Mammary epithelial cell (primary cell): ENCODE measurements at regions of chr2 and their contacts with region 1.

Region 1: GRCh38 chr2:205605628-205606304 is 76.5 kb upstream of the NRP2 start:
- DNase-seq: no peak
- H3K4me3 ChIP-seq: no peak overlapping the region
- H3K27ac ChIP-seq: no peak overlapping the region
- H3K4me1 ChIP-seq: no peaks in the 10 kb centered on the region
- H3K27me3 ChIP-seq: peaks cover 2% of the 10 kb centered on the region
- CTCF ChIP-seq: no peak

Region 2: DNA sequence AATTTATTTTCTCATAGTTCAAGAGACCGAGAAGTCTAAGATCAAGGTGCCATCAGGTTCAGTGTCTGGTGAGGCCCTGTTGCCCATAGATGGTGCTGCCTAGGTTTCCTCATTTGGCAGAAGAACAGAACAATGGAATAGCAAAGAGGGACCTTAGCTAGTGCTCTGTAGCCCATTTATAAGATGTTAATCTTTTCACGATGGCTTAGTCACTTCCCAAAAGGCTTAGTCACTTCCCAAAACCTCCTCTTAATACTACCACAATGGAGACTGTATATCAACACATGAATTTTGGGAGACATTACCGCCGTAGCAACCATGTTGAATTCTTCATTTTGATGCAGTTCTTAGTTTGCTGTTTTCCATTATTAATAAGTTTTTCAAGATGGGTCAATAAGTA is 169.8 kb before region 1 on chr2:
- CTCF ChIA-PET with region 1: no interaction called
- dilution Hi-C with region 1: no loop called
- in situ Hi-C with region 1: no loop called
- intact Hi-C with region 1: no loop called
- DNase-seq: peak; percentile 19
- H3K4me3 ChIP-seq: no peak overlapping the region
- H3K27ac ChIP-seq: no peak overlapping the region
- H3K4me1 ChIP-seq: peaks cover 4% of the 10 kb centered on the region
- H3K27me3 ChIP-seq: no peaks in the 10 kb centered on the region
- CTCF ChIP-seq: no peak

Region 3: GRCh38 chr2:205543937-205544702 is 61.6 kb before region 1 on chr2:
- CTCF ChIA-PET with region 1: no interaction called
- dilution Hi-C with region 1: no loop called
- in situ Hi-C with region 1: no loop called
- intact Hi-C with region 1: no loop called
- DNase-seq: no peak
- H3K4me3 ChIP-seq: no peak overlapping the region
- H3K27ac ChIP-seq: no peak overlapping the region
- H3K4me1 ChIP-seq: no peaks in the 10 kb centered on the region
- H3K27me3 ChIP-seq: no peaks in the 10 kb centered on the region
- CTCF ChIP-seq: no peak

Region 4: GRCh38 chr2:205593891-205594290 is 11.9 kb before region 1 on chr2:
- CTCF ChIA-PET with region 1: no interaction called
- dilution Hi-C with region 1: no loop called
- in situ Hi-C with region 1: no loop called
- intact Hi-C with region 1: loop called (anchors 2 kb)
- DNase-seq: no peak
- H3K4me3 ChIP-seq: no peak overlapping the region
- H3K27ac ChIP-seq: no peak overlapping the region
- H3K4me1 ChIP-seq: peaks cover 7% of the 10 kb centered on the region
- H3K27me3 ChIP-seq: no peaks in the 10 kb centered on the region
- CTCF ChIP-seq: no peak